ENCODE measurements at regions of chr12 and their contacts with region 1.

Region 1: DNA sequence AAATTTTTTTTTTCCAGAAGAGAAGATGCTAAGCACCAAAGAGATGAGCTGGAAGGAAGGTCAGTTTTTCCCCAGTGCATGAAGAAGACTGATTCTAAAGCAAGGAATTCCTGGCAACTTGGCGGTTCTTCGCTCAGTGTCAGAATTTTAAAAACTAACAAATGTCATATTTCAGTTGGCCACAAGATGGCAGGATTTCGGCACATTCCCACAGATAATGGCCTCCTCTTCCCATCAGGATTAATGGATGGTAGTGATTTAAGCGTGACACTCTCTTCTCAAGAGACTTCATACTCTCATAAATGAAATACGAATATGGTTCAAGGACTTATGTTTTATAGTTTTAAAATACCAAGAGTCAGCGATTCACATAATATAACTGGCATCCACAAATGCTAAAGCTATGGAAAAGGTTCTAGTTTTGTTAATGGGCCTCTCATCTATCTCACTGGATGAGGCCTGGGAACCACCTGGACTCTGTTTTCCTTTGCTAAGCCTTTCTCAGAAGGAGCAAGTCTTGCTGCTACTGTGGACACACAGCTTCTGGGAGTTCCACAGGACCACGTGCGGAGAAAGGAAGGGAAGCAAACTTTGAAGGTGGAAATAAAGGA is 46.1 kb upstream of the PTPRO start:
- DNase-seq: no peak
- ATAC-seq: no peak

Region 2: GRCh38 chr12:14716848-14717444 is 559.2 kb before region 1 on chr12:
- intact Hi-C with region 1: no loop called
- DNase-seq: no peak
- ATAC-seq: peak; percentile 33

Region 3: GRCh38 chr12:15522565-15523187 is 246.5 kb after region 1 on chr12:
- intact Hi-C with region 1: loop called (anchors 2 kb)
- DNase-seq: no peak
- ATAC-seq: no peak

Region 4: DNA sequence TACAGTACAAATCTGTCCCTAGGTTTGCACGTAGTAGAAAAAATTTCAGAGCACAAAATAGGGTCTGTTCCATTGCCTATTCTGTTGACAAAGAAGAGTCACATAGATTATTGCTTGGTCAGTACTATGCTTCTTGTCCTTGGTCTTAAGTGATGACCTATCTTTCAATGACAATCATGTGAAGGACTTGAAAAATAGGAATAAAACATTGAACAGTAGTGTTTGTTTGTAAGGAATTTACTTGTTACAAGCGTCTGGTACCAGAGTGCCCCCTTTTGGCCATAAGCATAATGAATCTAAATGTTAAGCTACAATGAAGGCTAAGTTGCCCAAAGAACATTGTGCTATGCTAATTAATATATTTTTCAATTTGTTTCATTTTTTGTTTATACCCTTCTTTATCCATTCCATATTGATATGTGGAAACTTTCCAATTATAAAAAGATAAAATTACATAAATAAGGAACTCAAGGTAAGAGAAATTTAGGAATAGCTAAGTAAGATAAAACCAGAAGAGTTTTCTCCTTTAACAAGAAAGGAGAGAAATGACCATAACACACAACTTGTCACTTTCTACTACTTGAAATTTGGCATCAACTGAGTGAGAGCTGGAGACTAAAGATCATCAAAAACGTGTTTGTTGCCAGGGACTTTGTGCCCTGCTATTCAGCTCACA is 308.3 kb after region 1 on chr12:
- intact Hi-C with region 1: loop called (anchors 10 kb)
- DNase-seq: no peak
- ATAC-seq: peak; percentile 21

Region 5: DNA sequence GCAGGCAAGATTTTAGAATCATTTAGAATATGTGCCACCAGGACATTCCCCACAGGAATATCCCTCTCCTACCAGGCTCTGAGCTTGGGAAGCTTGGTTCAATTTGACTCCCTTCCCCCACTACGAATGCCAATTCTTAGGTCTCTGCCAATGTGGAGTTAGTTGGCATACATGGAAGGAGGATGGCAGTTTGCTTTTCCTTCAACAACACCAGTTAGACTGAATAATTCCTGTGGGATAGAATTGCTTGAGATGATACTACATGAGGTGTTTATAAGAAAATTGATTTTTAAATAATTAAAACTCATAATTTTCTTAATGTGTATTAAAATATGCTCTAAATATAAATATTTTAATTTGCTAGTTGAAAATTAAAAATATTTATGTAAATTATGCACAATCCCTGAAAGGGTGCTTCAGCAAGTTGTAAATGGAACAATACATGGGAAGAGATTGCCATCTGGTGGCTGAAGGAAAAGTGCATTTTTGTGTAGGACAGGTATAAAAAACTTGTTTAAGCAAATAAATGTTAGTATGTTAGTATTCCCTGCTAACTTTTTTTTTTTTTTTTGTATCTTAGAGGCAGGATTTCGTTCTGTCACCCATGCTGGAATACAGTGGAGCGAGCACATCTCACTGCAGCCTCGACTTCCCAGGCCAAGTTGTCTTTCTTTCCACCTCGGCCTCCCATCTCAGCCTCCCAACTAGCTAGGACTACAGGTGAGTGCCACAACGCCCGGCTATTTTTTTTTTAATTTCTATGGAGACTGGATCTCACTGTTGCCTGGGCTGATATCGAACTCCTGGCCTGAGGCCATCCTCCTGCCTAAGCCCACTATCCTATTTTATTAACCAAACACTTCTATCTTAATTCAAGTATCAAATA is 580.1 kb after region 1 on chr12:
- intact Hi-C with region 1: loop called (anchors 10 kb)
- DNase-seq: no peak
- ATAC-seq: peak; percentile 60